ENCODE measurements at regions of chr5 and their contacts with region 1.

Region 1: GRCh38 chr5:54895816-54896341 is 89.5 kb downstream of the ESM1 start:
- DNase-seq: peak; percentile 73
- H3K4me3 Mint-ChIP-seq: no peak overlapping the region
- H3K27ac Mint-ChIP-seq: peak overlapping the region; percentile 29
- H3K4me1 Mint-ChIP-seq: peaks cover 5% of the 10 kb centered on the region
- H3K27me3 Mint-ChIP-seq: peaks cover 40% of the 10 kb centered on the region
- CTCF ChIP-seq: peak; percentile 65

Region 2: DNA sequence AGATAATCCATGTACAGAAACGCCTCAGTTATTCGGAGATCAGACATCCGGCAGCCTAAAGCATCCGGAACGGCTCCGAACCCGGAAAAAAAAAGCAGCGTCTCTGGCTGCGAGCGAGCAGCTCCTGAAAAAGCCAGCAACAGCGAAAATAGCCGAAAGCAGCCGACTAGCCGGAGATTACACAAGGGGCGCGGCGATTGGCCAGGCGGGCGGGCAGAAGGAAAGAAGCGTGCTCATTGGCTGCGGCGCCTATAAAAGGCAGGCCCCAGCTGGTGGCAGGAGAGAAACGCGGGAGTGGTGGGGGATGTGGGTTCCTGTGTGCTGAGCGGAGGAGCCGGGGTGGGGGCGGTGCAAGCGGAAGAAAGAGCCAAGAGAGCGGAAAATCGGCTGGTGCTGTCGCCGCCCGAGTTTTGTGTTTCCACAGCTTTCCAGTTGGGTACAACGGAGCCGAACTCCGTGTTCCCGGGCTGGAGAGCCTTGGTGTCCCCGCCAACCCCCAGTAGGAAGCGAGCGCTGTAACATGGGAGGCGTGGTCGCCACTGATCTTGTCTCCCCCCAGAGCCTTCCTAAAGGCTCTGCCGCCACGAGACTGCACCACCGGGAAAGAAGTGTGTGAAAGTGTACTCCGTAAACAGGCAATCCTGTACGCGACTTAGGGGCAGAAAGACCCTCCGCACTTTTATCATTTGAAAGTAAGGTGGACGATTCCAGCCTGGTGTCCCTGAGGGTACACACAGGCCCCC is 585.3 kb before region 1 on chr5 and contains the start of gene ARL15:
- CTCF ChIA-PET with region 1: no interaction called
- POLR2A ChIA-PET with region 1: interaction called, 4 read pairs
- intact Hi-C with region 1: loop called (anchors 10 kb)
- DNase-seq: peak; percentile 98
- H3K4me3 Mint-ChIP-seq: peak within 1 kb of the TSS; percentile 88
- H3K27ac Mint-ChIP-seq: peak within 1 kb of the TSS; percentile 86
- H3K4me1 Mint-ChIP-seq: peaks cover 17% of the 10 kb centered on the region
- H3K27me3 Mint-ChIP-seq: no peaks in the 10 kb centered on the region
- CTCF ChIP-seq: no peak
- total RNA-seq, gene ARL15: 10.1 and 11.3 TPM in 2 replicates

Region 3: DNA sequence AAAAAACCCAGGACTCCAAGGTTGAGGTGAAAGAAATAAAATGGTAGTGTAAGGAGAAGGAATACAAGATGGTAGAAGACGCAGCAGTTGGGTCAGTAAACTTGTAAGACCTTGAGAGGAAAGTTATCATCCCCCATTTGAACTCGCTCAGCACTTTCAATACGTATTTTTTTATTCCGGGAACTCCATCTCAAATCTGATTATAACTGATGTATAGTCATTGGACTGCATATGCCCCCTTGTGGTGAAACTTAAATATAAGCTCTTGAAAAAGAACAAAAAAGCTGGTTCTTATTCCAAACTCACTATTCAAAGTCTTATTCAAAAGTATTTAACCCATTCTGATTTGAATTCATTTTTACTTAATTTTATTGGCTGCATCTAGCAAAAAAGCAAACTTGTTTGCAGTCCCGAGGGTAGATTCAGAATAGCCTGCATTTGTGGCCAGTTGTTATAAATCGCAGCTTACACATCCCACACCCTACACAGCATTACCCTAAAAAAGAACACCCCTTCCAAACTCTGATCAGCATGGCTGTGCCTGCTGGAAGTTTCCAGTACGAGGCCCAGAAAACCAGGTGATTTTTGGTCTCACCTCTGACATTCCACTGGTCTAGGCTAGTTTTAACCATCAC is 28.5 kb before region 1 on chr5:
- CTCF ChIA-PET with region 1: interaction called, 42 read pairs
- POLR2A ChIA-PET with region 1: interaction called, 4 read pairs
- intact Hi-C with region 1: loop called (anchors 2 kb)
- DNase-seq: peak; percentile 57
- H3K4me3 Mint-ChIP-seq: peak overlapping the region; percentile 44
- H3K27ac Mint-ChIP-seq: no peak overlapping the region
- H3K4me1 Mint-ChIP-seq: peaks cover 6% of the 10 kb centered on the region
- H3K27me3 Mint-ChIP-seq: peaks cover 13% of the 10 kb centered on the region
- CTCF ChIP-seq: peak; percentile 49

Region 4: DNA sequence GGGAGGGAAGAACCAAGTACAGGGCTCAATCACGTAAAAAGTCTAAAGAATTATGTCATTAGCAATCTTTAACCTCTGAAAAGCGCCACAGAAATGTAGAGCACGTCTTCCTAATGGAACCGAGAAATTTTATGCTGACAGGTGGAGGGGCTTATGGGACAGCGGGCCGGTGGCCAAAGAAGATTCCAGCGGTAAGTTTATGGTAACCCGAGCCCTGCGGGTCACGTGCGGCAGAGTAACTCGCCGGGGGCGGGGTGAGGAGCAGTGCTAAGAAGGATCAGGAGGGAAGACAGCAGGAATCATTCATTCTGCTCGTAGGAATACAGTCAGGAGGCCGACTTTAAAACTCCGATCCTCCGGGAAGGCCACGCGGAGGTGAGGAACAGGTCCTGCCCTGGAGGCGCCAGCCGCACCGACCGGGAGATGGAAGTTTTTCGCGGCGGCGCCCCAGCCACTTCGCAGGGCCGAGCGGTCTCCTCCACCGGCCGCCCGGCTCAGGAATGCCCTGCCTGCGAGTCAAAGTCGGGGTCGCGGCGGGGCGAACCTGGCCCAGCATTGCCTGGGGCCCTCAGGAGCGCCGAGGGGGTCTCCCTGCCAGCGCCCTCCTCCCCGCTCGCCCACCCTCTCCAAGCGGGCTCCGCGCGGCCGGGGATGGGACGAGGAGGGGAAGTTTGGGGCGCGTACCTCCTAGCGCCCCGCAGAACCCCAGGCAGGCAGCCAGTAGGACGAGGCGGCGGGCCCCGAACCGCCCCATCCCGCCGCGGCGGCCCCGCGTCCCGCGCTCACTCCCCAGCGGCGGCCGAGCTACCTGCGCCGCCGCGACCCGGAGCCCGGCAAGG is 12.3 kb before region 1 on chr5:
- CTCF ChIA-PET with region 1: interaction called, 12 read pairs
- POLR2A ChIA-PET with region 1: interaction called, 10 read pairs
- intact Hi-C with region 1: no loop called
- DNase-seq: no peak
- H3K4me3 Mint-ChIP-seq: no peak overlapping the region
- H3K27ac Mint-ChIP-seq: peak overlapping the region; percentile 53
- H3K4me1 Mint-ChIP-seq: peaks cover 18% of the 10 kb centered on the region
- H3K27me3 Mint-ChIP-seq: no peaks in the 10 kb centered on the region
- CTCF ChIP-seq: no peak

Region 5: DNA sequence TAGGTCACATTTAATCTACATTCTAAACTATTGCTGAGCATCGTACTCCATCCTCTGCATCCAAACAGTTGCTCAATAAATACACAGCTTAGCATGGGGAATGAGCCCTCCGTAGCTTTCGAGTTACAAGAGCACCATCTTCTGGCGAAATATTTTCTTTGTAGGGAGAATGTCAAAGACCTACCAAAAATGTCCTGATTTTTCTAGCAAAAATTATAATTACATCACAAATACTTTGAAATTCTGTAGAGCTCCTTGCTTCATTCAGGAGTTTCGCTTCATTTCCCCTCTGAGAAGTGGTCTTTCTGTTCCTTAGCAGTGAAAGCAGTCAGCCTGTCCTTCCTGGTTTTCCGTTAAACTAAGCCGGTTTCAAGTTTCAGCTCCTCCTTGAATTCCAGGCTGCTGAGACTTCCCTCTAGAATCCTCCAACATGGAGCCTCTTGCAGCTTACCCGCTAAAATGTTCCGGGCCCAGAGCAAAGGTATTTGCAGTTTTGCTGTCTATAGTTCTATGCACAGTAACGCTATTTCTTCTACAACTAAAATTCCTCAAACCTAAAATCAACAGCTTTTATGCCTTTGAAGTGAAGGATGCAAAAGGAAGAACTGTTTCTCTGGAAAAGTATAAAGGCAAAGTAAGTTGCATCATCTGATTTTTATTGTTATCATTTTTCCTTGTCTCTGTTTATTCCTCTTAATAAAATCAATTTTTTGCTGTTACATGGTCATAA is 264.0 kb after region 1 on chr5 and contains the start of gene GPX8:
- CTCF ChIA-PET with region 1: interaction called, 100 read pairs
- POLR2A ChIA-PET with region 1: interaction called, 5 read pairs
- intact Hi-C with region 1: no loop called
- DNase-seq: peak; percentile 88
- H3K4me3 Mint-ChIP-seq: peak within 1 kb of the TSS; percentile 78
- H3K27ac Mint-ChIP-seq: peak within 1 kb of the TSS; percentile 82
- H3K4me1 Mint-ChIP-seq: peaks cover 2% of the 10 kb centered on the region
- H3K27me3 Mint-ChIP-seq: peaks cover 13% of the 10 kb centered on the region
- CTCF ChIP-seq: peak; percentile 66
- total RNA-seq, gene GPX8: 37.2 and 38.8 TPM in 2 replicates

Region 6: GRCh38 chr5:55176176-55176818 is 280.4 kb after region 1 on chr5:
- CTCF ChIA-PET with region 1: no interaction called
- POLR2A ChIA-PET with region 1: no interaction called
- intact Hi-C with region 1: no loop called
- DNase-seq: peak; percentile 66
- H3K4me3 Mint-ChIP-seq: peak overlapping the region; percentile 57
- H3K27ac Mint-ChIP-seq: no peak overlapping the region
- H3K4me1 Mint-ChIP-seq: peaks cover 16% of the 10 kb centered on the region
- H3K27me3 Mint-ChIP-seq: no peaks in the 10 kb centered on the region
- CTCF ChIP-seq: peak; percentile 10

Measured in MCF 10A (cell line).